ENCODE measurements at regions of chr15 and their contacts with region 1.

Region 1: GRCh38 chr15:47473832-47474231 is 243.5 kb upstream of the SEMA6D start:
- DNase-seq: peak; percentile 76

Region 2: GRCh38 chr15:47397655-47398054 is 76.2 kb before region 1 on chr15:
- intact Hi-C with region 1: loop called (anchors 5 kb)
- DNase-seq: no peak